Right ventricle myocardium inferior (tissue), 1 donor: ENCODE measurements at regions of chr7 and their contacts with region 1.

Region 1: GRCh38 chr7:71511361-71511807 is 379.4 kb downstream of the GALNT17 start:
- DNase-seq: no peak
- ATAC-seq: no peak

Region 2: GRCh38 chr7:70856866-70857630 is 654.3 kb before region 1 on chr7:
- intact Hi-C with region 1: loop called (anchors 10 kb)
- DNase-seq: no peak
- ATAC-seq: no peak